ENCODE measurements at regions of chr12 and their contacts with region 1.

Region 1: GRCh38 chr12:28424965-28425364 is 234.7 kb downstream of the CCDC91 start:
- DNase-seq: peak; percentile 22 to 70 (median 36)
- ATAC-seq: peak; percentile 37 to 91 (median 72)
- H3K4me3 ChIP-seq: no peak overlapping the region
- H3K27ac ChIP-seq: peak overlapping the region in 5 of 12 donors; percentile 6 to 38 (median 32)
- H3K4me1 ChIP-seq: peaks cover 0 to 16% (median 4%) of the 10 kb centered on the region in 12 donors
- H3K27me3 ChIP-seq: no peaks in the 10 kb centered on the region
- CTCF ChIP-seq: no peak
- POLR2A ChIP-seq: no peak

Region 2: GRCh38 chr12:28374556-28374955 is 50.4 kb before region 1 on chr12:
- intact Hi-C with region 1: loop called in 1 of 10 experiments (anchors 5 kb)
- DNase-seq: no peak
- ATAC-seq: no peak
- H3K4me3 ChIP-seq: no peak overlapping the region
- H3K27ac ChIP-seq: no peak overlapping the region
- H3K4me1 ChIP-seq: peaks cover 0 to 5% (median 0%) of the 10 kb centered on the region in 12 donors
- H3K27me3 ChIP-seq: no peaks in the 10 kb centered on the region
- CTCF ChIP-seq: no peak
- POLR2A ChIP-seq: no peak

Measured in heart left ventricle (tissue), 16 donors.